ENCODE measurements at regions of chr5 and their contacts with region 1.

Region 1: GRCh38 chr5:73448463-73449136 is at the start of gene FOXD1:
- DNase-seq: peak in 4 of 9 experiments; percentile 32 to 64 (median 58)
- ATAC-seq: peak; percentile 25
- H3K4me3 ChIP-seq: peak within 1 kb of the TSS; percentile 41 to 54
- H3K4me3 Mint-ChIP-seq: peak within 1 kb of the TSS; percentile 86
- H3K27ac ChIP-seq: no peak within 1 kb of the TSS
- H3K27ac Mint-ChIP-seq: no peak within 1 kb of the TSS
- H3K4me1 ChIP-seq: peaks cover 19% of the 10 kb centered on the region
- H3K4me1 Mint-ChIP-seq: peaks cover 19% of the 10 kb centered on the region
- H3K27me3 ChIP-seq: peaks cover 71 to 82% of the 10 kb centered on the region in 2 experiments
- H3K27me3 Mint-ChIP-seq: peaks cover 69% of the 10 kb centered on the region
- CTCF ChIP-seq: no peak
- total RNA-seq, gene FOXD1: 0.35 TPM in 1 of 2 experiments, not detected in the other

Region 2: GRCh38 chr5:73088026-73088425 is 360.6 kb before region 1 on chr5:
- CTCF ChIA-PET with region 1: interaction called, 7 read pairs
- POLR2A ChIA-PET with region 1: no interaction called
- intact Hi-C with region 1: loop called (anchors 2 kb)
- DNase-seq: no peak
- ATAC-seq: no peak
- H3K4me3 ChIP-seq: no peak overlapping the region
- H3K4me3 Mint-ChIP-seq: no peak overlapping the region
- H3K27ac ChIP-seq: no peak overlapping the region
- H3K27ac Mint-ChIP-seq: no peak overlapping the region
- H3K4me1 ChIP-seq: no peaks in the 10 kb centered on the region
- H3K4me1 Mint-ChIP-seq: peaks cover 2% of the 10 kb centered on the region
- H3K27me3 ChIP-seq: no peaks in the 10 kb centered on the region
- H3K27me3 Mint-ChIP-seq: peaks cover 7% of the 10 kb centered on the region
- CTCF ChIP-seq: no peak

Region 3: DNA sequence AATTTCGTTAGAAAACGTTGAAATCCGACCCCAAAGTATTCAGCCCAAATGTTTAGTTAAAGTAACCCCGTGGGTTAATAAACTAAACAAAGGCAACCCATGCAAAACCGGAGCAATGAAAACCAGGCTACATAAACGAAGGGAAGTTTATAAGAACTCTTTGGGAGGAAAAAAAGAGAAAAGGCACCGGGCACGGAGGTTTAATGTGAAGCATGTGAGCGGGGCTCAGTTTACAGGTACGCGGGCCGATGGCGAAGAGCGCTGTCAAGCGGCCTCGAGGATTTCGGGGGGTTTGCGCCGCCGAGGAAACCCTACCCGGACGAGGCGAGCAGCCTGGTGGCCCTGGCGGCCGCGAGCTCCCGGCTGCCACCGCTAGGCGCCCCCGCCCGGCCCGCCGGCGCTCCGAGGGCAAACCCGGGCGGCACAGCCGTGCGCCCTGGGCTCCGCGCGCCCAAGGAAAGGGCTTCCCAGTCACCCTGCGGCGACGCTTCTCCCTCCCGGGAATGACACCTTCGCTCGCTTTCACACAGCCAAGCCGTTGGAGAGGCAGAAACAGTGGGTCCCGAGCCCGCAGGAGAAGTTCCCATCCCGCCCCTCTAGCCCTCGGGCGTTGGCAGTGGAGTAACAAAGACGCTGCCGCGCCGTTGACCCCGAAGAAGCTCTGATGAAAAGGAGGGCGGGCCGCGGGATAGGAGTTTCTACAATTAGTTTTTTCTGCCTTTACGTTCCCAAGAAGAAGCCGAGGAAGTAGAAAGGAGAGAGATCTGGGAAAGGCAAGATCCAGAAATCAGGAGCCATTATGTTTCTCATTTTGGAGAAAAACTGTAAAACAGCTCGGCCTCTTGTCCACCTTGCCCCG is 149.6 kb before region 1 on chr5:
- CTCF ChIA-PET with region 1: interaction called, 6 read pairs
- POLR2A ChIA-PET with region 1: no interaction called
- intact Hi-C with region 1: loop called in 1 of 2 experiments (anchors 1 kb)
- DNase-seq: peak in 2 of 9 experiments; percentile 25 to 28
- ATAC-seq: peak; percentile 40
- H3K4me3 ChIP-seq: no peak overlapping the region
- H3K4me3 Mint-ChIP-seq: no peak overlapping the region
- H3K27ac ChIP-seq: no peak overlapping the region
- H3K27ac Mint-ChIP-seq: no peak overlapping the region
- H3K4me1 ChIP-seq: no peaks in the 10 kb centered on the region
- H3K4me1 Mint-ChIP-seq: peaks cover 23% of the 10 kb centered on the region
- H3K27me3 ChIP-seq: peaks cover 16 to 45% of the 10 kb centered on the region in 2 experiments
- H3K27me3 Mint-ChIP-seq: peaks cover 82% of the 10 kb centered on the region
- CTCF ChIP-seq: no peak

Region 4: DNA sequence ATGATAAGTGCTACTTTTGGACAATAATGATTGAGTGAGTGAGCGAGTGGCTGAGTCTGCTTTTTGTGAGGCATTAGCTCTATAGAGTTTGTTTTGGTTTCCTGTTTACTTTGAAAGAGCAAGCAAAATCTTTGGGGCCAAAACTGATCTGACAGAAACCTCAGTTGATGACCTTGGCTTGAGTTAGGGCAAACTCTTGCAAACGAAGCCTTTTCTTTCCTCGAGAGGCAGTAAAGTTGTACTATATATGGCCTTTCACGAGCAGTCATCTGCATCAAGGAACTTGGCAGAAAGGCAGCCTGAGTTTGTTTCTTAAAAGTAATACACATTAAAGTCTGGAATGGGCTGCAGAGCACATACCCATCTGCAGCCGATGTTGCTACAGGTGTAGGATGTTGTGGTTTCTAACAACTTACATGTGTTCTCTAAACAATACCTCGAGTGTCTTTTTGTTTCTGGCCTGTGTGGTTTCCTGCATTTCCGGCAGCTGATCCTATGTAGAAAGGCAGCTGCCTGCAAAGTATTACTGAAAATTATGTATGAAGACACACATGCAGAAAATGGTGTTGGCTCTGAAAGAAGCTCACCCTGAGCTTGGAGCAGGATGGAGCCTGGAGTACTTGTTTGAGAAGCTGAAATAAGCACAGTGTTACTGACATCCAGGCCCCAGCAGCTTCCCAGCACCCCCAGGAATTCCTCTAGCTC is 60.8 kb before region 1 on chr5:
- CTCF ChIA-PET with region 1: interaction called, 4 read pairs
- POLR2A ChIA-PET with region 1: interaction called, 3 read pairs
- intact Hi-C with region 1: loop called (anchors 1 kb)
- DNase-seq: peak; percentile 25 to 83 (median 43)
- ATAC-seq: peak; percentile 93
- H3K4me3 ChIP-seq: no peak overlapping the region
- H3K4me3 Mint-ChIP-seq: peak overlapping the region; percentile 52
- H3K27ac ChIP-seq: no peak overlapping the region
- H3K27ac Mint-ChIP-seq: peak overlapping the region; percentile 53
- H3K4me1 ChIP-seq: peaks cover 28% of the 10 kb centered on the region
- H3K4me1 Mint-ChIP-seq: peaks cover 32% of the 10 kb centered on the region
- H3K27me3 ChIP-seq: peaks cover 2 to 4% of the 10 kb centered on the region in 2 experiments
- H3K27me3 Mint-ChIP-seq: peaks cover 13% of the 10 kb centered on the region
- CTCF ChIP-seq: no peak

Region 5: DNA sequence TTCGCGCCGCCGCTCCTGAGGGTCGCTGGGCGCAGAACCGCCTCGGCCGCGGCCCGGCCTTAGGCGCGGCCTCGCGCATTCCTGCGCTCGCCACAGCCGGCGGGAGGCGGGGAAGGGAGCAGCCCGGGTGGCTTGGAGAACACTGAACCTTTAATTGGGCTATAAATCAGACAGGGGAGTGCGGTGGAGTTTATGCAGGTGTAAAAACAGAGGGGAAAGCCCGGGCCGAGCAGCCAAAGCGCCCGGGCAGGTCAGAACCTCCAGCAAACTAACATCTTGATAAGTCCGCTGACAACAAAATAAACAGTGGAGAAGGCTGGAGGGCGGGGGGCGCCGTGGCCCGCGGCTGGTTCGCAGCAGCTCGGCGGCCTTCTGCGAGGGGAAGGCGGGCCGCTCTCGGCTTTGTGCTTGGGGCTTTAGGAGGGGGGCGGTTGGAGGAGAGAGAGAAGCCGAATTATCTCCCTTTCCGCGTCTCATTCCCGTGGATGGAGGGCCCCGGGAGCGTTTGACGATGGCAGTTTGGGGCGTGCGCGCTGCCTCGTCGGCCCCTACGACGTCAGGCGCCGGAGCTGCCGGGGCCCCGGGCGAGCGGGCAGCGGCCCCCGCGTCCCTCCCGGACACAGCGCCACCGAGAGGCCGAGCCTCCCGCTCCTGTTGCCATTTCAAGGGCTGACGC is 11.4 kb before region 1 on chr5:
- CTCF ChIA-PET with region 1: interaction called, 23 read pairs
- POLR2A ChIA-PET with region 1: no interaction called
- intact Hi-C with region 1: loop called in 1 of 2 experiments (anchors 1 kb)
- DNase-seq: peak in 1 of 9 experiments; percentile 33
- ATAC-seq: no peak
- H3K4me3 ChIP-seq: no peak overlapping the region
- H3K4me3 Mint-ChIP-seq: peak overlapping the region; percentile 59
- H3K27ac ChIP-seq: no peak overlapping the region
- H3K27ac Mint-ChIP-seq: no peak overlapping the region
- H3K4me1 ChIP-seq: peaks cover 15% of the 10 kb centered on the region
- H3K4me1 Mint-ChIP-seq: peaks cover 14% of the 10 kb centered on the region
- H3K27me3 ChIP-seq: peaks cover 48 to 65% of the 10 kb centered on the region in 2 experiments
- H3K27me3 Mint-ChIP-seq: peaks cover 79% of the 10 kb centered on the region
- CTCF ChIP-seq: no peak

Region 6: DNA sequence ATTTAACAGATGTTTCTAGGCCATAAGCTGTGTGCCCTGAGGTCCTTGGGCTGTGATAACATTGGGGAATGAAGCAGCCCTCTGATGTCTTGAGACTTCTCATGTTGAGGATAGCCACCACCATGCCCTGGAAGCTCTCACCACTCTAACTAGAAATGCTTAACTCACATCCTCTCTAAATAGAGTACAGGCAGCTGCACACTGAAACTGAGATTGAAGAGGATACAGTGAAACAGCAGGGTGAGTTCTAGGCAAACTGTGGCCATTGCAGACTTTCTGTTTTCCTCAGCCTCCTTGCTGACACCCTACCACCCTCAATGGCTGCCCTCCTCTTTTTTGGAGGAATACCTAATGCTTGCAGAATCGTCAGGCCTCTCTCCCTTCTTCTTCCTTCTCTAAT is 139.3 kb after region 1 on chr5:
- CTCF ChIA-PET with region 1: no interaction called
- POLR2A ChIA-PET with region 1: no interaction called
- intact Hi-C with region 1: no loop called
- DNase-seq: no peak
- ATAC-seq: no peak
- H3K4me3 ChIP-seq: no peak overlapping the region
- H3K4me3 Mint-ChIP-seq: no peak overlapping the region
- H3K27ac ChIP-seq: no peak overlapping the region
- H3K27ac Mint-ChIP-seq: no peak overlapping the region
- H3K4me1 ChIP-seq: no peaks in the 10 kb centered on the region
- H3K4me1 Mint-ChIP-seq: no peaks in the 10 kb centered on the region
- H3K27me3 ChIP-seq: no peaks in the 10 kb centered on the region
- H3K27me3 Mint-ChIP-seq: no peaks in the 10 kb centered on the region
- CTCF ChIP-seq: no peak

Measured in CD8-positive, alpha-beta T cell (primary cell).